ENCODE measurements at regions of chr15 and their contacts with region 1.

Region 1: DNA sequence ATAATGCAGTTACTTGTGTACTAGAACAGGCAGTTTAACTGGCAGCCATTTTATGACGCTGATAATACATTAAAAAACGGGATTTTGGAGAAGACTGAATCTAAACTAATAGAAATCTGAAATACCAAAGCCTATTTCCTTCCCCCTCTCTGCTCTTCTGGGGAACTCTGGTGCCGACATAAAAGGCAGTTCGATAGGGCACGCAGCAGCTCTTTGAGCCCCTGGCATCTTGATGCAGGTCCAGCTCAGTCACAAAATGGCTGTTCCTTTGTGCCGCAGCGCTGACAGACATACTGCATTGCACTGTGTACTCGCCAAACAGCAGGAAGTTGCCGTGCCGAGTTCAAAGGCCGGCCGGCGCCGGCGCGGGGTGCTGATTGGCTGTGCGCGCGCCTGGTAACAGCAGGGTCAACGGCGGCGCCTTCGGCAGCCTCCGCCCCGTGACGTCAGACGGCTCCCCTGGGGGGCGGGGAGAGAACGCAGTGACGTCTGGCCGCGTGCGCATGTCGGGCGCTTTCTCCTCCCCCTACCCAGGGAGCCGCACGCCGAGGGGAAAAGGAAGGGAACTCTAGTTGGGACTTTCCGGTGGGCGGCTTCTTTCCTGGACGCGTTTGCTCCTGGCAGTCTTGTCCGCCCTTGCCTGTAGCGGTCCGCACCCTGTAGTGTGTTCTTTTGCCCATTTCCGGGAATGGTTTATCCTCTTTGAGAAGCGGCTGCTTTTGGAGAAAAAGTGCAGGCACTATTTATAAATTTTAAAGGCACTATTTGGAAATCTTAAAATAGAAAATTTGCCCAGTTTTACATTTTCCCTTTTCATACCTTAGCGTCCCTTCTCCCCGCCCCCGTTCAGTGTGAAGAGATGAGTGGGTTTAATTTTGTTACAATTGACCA is 4.1 kb downstream of the CHD2 start:
- DNase-seq: peak; percentile 98 to 100 (median 99)
- ATAC-seq: peak; percentile 78 to 85
- H3K4me3 Mint-ChIP-seq: peak overlapping the region; percentile 92 to 100 (median 98)
- H3K27ac Mint-ChIP-seq: peak overlapping the region; percentile 96 to 100 (median 100)
- H3K4me1 Mint-ChIP-seq: peaks cover 35 to 74% (median 58%) of the 10 kb centered on the region in 4 donors
- H3K27me3 Mint-ChIP-seq: no peaks in the 10 kb centered on the region

Region 2: GRCh38 chr15:92714477-92715401 is 189.4 kb before region 1 on chr15:
- POLR2A ChIA-PET with region 1: no interaction called
- DNase-seq: peak; percentile 55 to 85 (median 76)
- ATAC-seq: peak; percentile 91 to 94
- H3K4me3 Mint-ChIP-seq: peak overlapping the region; percentile 76 to 87 (median 84)
- H3K27ac Mint-ChIP-seq: peak overlapping the region in 5 of 10 donors; percentile 25 to 67 (median 34)
- H3K4me1 Mint-ChIP-seq: peaks cover 5 to 13% (median 7%) of the 10 kb centered on the region in 4 donors
- H3K27me3 Mint-ChIP-seq: peaks cover 0 to 17% (median 6%) of the 10 kb centered on the region in 5 donors

Region 3: DNA sequence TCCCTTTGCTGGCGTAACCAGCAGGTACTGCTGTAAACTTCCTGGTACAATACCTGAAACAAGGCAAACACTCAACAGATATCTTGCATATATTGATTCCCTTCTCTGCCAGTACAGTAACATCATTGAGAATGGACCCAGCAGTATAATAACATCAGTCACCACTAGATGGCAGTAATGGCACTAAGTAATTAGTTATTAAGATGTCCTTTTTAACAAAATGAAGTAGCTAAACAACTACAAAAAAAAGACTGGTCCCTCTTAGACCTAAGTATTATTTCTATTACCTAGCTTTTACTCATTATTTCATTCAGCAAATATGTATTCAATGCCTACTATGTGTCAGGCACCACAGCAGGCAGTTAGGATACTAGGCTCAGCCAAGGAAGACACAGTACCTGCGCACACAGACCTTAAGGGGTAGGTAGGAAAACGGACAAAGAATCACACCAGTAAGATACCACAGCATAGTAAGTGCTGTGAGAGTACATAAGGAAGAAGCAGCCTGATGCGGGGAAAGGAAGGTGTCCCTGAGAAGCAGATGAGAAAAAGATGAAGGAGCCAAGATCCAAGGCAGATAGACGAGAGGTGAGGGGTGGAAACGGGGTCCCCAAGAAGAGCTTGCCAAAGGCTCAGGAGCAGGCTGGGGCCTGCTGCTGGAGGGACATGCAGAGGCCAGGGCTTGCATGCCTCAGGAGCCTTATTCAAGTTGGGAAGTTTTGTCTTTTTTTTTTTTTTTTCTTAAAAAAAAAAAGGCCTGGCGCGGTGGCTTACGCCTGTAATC is 106.8 kb before region 1 on chr15:
- POLR2A ChIA-PET with region 1: interaction called, 12 read pairs
- DNase-seq: peak in 7 of 10 donors; percentile 12 to 82 (median 67)
- ATAC-seq: peak; percentile 89 to 91
- H3K4me3 Mint-ChIP-seq: peak overlapping the region in 1 of 10 donors; percentile 22
- H3K27ac Mint-ChIP-seq: peak overlapping the region; percentile 25 to 90 (median 76)
- H3K4me1 Mint-ChIP-seq: peaks cover 4 to 8% (median 7%) of the 10 kb centered on the region in 4 donors
- H3K27me3 Mint-ChIP-seq: no peaks in the 10 kb centered on the region

Region 4: DNA sequence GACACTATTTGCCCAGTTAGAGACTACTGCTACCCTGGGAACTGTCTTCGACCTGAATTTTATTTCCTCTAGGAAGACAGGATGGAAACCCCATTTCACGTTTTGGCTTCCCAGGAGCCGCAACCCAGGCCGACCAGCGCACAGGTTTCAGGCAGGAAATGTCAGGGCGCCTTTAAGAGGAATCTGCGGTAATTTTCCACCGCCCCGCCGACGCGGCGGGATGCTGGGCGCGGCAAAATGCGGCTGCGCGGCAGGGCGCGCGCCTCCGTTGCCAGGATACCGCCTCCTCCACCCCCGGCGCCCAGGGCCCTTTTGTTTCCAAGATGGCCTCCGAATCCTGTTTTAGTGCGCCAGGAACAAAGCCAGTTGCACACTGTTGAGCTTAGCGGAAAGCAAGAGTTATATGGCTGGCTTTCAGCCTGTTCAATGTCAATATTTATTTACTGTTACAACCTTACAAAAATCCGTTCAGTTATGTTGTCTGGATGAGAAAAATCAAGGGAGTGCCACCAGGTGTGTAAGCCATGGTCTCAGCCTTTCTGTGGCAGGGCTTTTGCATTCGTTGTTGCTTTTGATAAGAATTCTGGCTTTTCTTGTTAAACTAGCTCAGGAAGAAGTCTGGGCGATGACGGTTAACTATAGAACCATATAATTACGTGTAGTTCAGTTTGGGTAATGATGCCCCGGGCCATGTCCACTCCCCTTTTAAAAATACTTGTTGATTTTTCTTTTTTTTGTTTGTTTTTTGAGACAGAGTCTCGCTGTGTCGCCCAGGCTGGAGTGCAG is 83.8 kb before region 1 on chr15:
- POLR2A ChIA-PET with region 1: interaction called, 30 read pairs
- DNase-seq: peak; percentile 78 to 93 (median 83)
- ATAC-seq: peak; percentile 79 to 91
- H3K4me3 Mint-ChIP-seq: peak overlapping the region; percentile 86 to 95 (median 89)
- H3K27ac Mint-ChIP-seq: peak overlapping the region; percentile 85 to 98 (median 97)
- H3K4me1 Mint-ChIP-seq: peaks cover 16 to 60% (median 49%) of the 10 kb centered on the region in 4 donors
- H3K27me3 Mint-ChIP-seq: no peaks in the 10 kb centered on the region

Region 5: DNA sequence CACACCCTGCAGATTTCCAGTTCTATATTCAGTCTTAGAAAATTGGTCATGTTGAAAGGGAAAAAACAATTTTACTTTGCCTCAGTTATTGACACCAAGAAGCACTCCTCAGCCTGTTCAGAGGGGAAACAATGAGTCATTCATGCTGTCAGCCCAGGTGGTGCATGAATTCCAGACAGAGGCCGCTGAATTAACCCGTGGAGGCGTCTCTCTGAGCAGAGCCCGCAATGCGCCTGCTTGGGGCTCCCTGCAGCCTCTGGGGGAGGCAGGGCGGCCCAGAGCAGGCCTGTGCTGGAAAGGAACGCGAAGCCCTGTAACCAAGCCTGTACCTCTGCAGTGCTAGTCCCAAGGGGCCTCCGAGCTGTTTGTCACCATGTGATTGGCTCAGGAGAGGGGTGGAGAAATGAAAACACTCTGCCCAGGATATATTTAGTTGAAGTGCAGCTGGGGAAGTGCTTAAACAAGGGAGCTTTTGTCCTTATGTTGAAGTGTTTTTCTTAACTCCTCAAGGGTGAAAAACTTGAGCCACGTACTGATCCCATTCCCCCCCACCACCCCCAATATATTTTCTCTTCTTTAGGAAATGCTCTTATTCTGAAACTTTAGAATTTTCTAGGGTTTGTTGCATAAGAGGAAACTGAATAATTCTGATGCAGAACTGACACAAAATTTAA is 72.4 kb before region 1 on chr15:
- POLR2A ChIA-PET with region 1: interaction called, 79 read pairs
- DNase-seq: peak; percentile 77 to 97 (median 87)
- ATAC-seq: peak; percentile 91 to 94
- H3K4me3 Mint-ChIP-seq: peak overlapping the region; percentile 70 to 86 (median 81)
- H3K27ac Mint-ChIP-seq: peak overlapping the region; percentile 94 to 98 (median 97)
- H3K4me1 Mint-ChIP-seq: peaks cover 18 to 55% (median 46%) of the 10 kb centered on the region in 4 donors
- H3K27me3 Mint-ChIP-seq: no peaks in the 10 kb centered on the region

Region 6: GRCh38 chr15:92845126-92845508 is 59.1 kb before region 1 on chr15:
- POLR2A ChIA-PET with region 1: interaction called, 12 read pairs
- DNase-seq: peak in 4 of 10 donors; percentile 13 to 78 (median 71)
- ATAC-seq: peak; percentile 38 to 43
- H3K4me3 Mint-ChIP-seq: peak overlapping the region; percentile 68 to 92 (median 88)
- H3K27ac Mint-ChIP-seq: peak overlapping the region; percentile 90 to 100 (median 97)
- H3K4me1 Mint-ChIP-seq: peaks cover 32 to 86% (median 74%) of the 10 kb centered on the region in 4 donors
- H3K27me3 Mint-ChIP-seq: no peaks in the 10 kb centered on the region

Region 7: GRCh38 chr15:92917606-92918407 is 13.6 kb after region 1 on chr15:
- POLR2A ChIA-PET with region 1: interaction called, 199 read pairs
- DNase-seq: peak; percentile 75 to 95 (median 90)
- ATAC-seq: peak; percentile 16 to 33
- H3K4me3 Mint-ChIP-seq: peak overlapping the region; percentile 26 to 92 (median 66)
- H3K27ac Mint-ChIP-seq: peak overlapping the region; percentile 90 to 100 (median 98)
- H3K4me1 Mint-ChIP-seq: peaks cover 43 to 93% (median 83%) of the 10 kb centered on the region in 4 donors
- H3K27me3 Mint-ChIP-seq: no peaks in the 10 kb centered on the region

Region 8: DNA sequence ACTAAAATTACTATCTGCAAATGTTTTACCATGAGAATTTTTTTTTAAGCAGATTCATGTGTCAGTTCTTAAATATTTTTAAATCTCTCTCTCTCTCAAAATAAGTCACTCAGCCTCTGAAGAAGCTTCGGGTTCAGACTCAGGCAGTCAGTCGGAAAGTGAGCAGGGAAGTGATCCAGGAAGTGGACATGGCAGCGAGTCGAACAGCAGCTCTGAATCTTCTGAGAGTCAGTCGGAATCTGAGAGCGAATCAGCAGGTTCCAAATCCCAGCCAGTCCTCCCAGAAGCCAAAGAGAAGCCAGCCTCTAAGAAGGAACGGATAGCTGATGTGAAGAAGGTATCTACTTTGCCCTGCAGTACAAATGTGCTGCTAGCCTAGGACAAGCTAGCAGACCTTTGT is 20.0 kb after region 1 on chr15:
- POLR2A ChIA-PET with region 1: interaction called, 16 read pairs
- DNase-seq: no peak
- ATAC-seq: no peak
- H3K4me3 Mint-ChIP-seq: peak overlapping the region in 7 of 10 donors; percentile 13 to 61 (median 51)
- H3K27ac Mint-ChIP-seq: peak overlapping the region; percentile 45 to 90 (median 84)
- H3K4me1 Mint-ChIP-seq: peaks cover 41 to 86% (median 79%) of the 10 kb centered on the region in 4 donors
- H3K27me3 Mint-ChIP-seq: no peaks in the 10 kb centered on the region

Region 9: GRCh38 chr15:93012786-93013185 is 108.6 kb after region 1 on chr15:
- POLR2A ChIA-PET with region 1: no interaction called
- DNase-seq: no peak
- ATAC-seq: no peak
- H3K4me3 Mint-ChIP-seq: no peak overlapping the region
- H3K27ac Mint-ChIP-seq: peak overlapping the region in 7 of 10 donors; percentile 40 to 82 (median 68)
- H3K4me1 Mint-ChIP-seq: peaks cover 4 to 14% (median 10%) of the 10 kb centered on the region in 4 donors
- H3K27me3 Mint-ChIP-seq: no peaks in the 10 kb centered on the region

Region 10: GRCh38 chr15:93087825-93088199 is 183.6 kb after region 1 on chr15:
- POLR2A ChIA-PET with region 1: no interaction called
- DNase-seq: peak; percentile 34 to 75 (median 55)
- ATAC-seq: peak; percentile 67 to 69
- H3K4me3 Mint-ChIP-seq: peak overlapping the region; percentile 73 to 91 (median 86)
- H3K27ac Mint-ChIP-seq: no peak overlapping the region
- H3K4me1 Mint-ChIP-seq: peaks cover 8 to 25% (median 17%) of the 10 kb centered on the region in 4 donors
- H3K27me3 Mint-ChIP-seq: peaks cover 37 to 78% (median 65%) of the 10 kb centered on the region in 5 donors

Region 11: GRCh38 chr15:93109336-93110102 is 205.3 kb after region 1 on chr15:
- POLR2A ChIA-PET with region 1: no interaction called
- DNase-seq: no peak
- ATAC-seq: no peak
- H3K4me3 Mint-ChIP-seq: peak overlapping the region in 1 of 10 donors; percentile 3
- H3K27ac Mint-ChIP-seq: no peak overlapping the region
- H3K4me1 Mint-ChIP-seq: peaks cover 0 to 4% (median 0%) of the 10 kb centered on the region in 4 donors
- H3K27me3 Mint-ChIP-seq: peaks cover 24 to 73% (median 50%) of the 10 kb centered on the region in 5 donors